ENCODE measurements at regions of chr2 and their contacts with region 1.

Region 1: GRCh38 chr2:67337903-67338302 is 59.2 kb upstream of the ETAA1 start:
- DNase-seq: no peak
- H3K4me3 ChIP-seq: no peak overlapping the region
- H3K27ac ChIP-seq: no peak overlapping the region
- H3K4me1 ChIP-seq: no peaks in the 10 kb centered on the region
- H3K27me3 ChIP-seq: no peaks in the 10 kb centered on the region
- CTCF ChIP-seq: no peak
- POLR2A ChIP-seq: no peak

Region 2: GRCh38 chr2:67234439-67234838 is 103.5 kb before region 1 on chr2:
- CTCF ChIA-PET with region 1: no interaction called
- POLR2A ChIA-PET with region 1: no interaction called
- dilution Hi-C with region 1: no loop called
- intact Hi-C with region 1: loop called (anchors 5 kb)
- DNase-seq: peak; percentile 26
- H3K4me3 ChIP-seq: no peak overlapping the region
- H3K27ac ChIP-seq: no peak overlapping the region
- H3K4me1 ChIP-seq: no peaks in the 10 kb centered on the region
- H3K27me3 ChIP-seq: no peaks in the 10 kb centered on the region
- CTCF ChIP-seq: peak; percentile 8 to 45
- POLR2A ChIP-seq: no peak

Region 3: DNA sequence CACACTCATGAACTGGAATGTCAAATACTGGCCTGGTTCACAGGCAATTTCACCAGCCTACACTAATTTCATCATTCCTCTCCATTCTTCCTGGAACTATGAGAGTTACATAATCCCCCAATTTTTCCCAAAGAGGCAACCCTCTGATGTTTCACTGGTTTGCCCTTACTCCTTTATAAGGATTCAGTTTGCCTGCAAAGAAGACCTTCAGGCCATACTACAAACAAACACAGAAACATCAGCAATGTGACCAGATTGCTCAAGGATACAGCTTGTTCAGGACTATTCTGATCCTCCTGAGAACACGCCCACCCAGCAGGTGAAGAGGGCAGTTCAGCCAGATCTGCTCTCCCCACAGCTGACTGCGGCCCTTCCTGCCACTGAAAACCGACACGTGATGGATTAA is 274.7 kb after region 1 on chr2:
- CTCF ChIA-PET with region 1: no interaction called
- POLR2A ChIA-PET with region 1: no interaction called
- dilution Hi-C with region 1: no loop called
- intact Hi-C with region 1: no loop called
- DNase-seq: no peak
- H3K4me3 ChIP-seq: no peak overlapping the region
- H3K27ac ChIP-seq: no peak overlapping the region
- H3K4me1 ChIP-seq: peaks cover 6% of the 10 kb centered on the region
- H3K27me3 ChIP-seq: no peaks in the 10 kb centered on the region
- CTCF ChIP-seq: no peak
- POLR2A ChIP-seq: no peak